MCF 10A (cell line): ENCODE measurements at regions of chr3 and their contacts with region 1.

Region 1: DNA sequence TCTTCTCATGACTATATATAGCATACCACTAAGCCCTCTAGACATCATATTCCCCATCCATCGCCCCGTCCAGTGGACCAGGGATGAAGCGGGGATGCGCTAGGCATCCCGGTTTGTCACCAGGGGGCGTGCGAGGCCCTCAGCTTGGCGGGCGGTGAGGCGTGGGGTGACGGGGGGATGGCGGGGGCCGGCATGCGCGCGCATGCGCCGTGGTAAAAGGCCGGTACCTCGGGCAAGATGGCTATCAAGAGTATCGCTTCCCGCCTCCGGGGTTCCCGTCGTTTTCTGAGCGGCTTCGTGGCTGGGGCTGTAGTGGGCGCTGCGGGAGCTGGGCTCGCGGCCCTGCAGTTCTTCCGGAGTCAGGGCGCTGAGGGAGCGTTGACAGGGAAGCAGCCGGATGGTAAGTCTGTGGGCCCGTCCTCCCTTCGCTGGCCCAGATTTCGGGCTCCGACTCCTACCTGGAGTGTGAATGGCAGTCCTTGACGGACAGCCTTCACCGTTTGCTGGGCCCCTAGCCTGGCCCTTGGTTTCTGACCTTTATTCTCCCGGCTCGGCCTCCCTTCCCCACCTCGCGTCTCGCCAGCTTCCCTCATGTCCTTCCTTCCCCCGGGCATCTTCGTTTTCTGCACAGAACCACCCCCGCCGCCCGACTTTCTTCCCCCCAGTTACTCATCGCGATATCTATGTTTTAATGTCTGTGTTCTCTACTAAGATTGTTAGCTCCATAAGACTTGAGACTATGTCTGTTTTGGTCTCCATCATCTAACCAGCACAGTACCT is at the start of gene EXOG:
- DNase-seq: peak; percentile 91
- H3K4me3 Mint-ChIP-seq: peak within 1 kb of the TSS; percentile 78
- H3K27ac Mint-ChIP-seq: peak within 1 kb of the TSS; percentile 33
- H3K4me1 Mint-ChIP-seq: peaks cover 9% of the 10 kb centered on the region
- H3K27me3 Mint-ChIP-seq: no peaks in the 10 kb centered on the region
- CTCF ChIP-seq: peak; percentile 82
- total RNA-seq, gene EXOG: 17.5 and 21.9 TPM in 2 replicates

Region 2: GRCh38 chr3:37237252-37237651 is 1259.1 kb before region 1 on chr3:
- CTCF ChIA-PET with region 1: no interaction called
- POLR2A ChIA-PET with region 1: no interaction called
- intact Hi-C with region 1: no loop called
- DNase-seq: peak; percentile 43
- H3K4me3 Mint-ChIP-seq: no peak overlapping the region
- H3K27ac Mint-ChIP-seq: peak overlapping the region; percentile 68
- H3K4me1 Mint-ChIP-seq: peaks cover 19% of the 10 kb centered on the region
- H3K27me3 Mint-ChIP-seq: no peaks in the 10 kb centered on the region
- CTCF ChIP-seq: no peak

Region 3: DNA sequence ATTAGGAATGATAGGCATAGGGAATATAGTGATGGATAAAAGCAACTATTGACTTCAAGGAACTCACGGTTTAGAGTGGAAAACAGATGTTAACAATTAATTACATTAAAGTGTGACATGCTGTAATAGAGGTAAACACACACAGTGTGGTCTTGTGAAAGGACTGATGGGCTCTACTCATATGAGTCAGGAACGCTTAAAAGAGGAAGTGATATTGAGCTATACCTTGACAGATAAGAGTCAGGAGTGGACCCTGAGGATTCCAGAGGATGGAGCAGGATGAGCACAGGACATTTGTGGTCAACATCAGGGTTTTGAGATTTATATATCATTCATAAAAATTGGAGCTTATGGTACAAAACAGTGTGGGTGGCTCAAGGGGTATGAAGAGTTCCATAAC is 10.8 kb after region 1 on chr3:
- CTCF ChIA-PET with region 1: interaction called, 12 read pairs
- POLR2A ChIA-PET with region 1: interaction called, 4 read pairs
- intact Hi-C with region 1: no loop called
- DNase-seq: no peak
- H3K4me3 Mint-ChIP-seq: no peak overlapping the region
- H3K27ac Mint-ChIP-seq: no peak overlapping the region
- H3K4me1 Mint-ChIP-seq: no peaks in the 10 kb centered on the region
- H3K27me3 Mint-ChIP-seq: no peaks in the 10 kb centered on the region
- CTCF ChIP-seq: no peak

Region 4: DNA sequence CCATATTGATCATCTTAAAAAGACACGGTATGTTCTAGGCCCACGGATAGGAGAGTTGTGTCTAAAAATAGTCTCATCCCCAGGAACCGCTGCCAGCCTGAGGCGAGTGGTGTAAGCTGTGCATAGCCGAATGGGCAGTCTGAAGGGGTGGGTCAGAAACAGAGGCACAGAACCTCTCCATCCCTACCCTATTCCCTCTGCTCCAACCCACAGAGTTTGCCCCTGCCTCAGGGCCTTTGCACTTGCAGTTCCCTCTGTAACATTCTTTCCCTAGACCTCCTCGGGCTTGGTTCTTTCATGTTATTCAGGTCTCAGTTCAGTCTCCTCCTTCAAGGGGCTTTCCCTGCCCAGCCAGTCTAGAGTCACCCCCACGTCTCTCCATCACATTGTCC is 148.3 kb after region 1 on chr3:
- CTCF ChIA-PET with region 1: interaction called, 10 read pairs
- POLR2A ChIA-PET with region 1: no interaction called
- intact Hi-C with region 1: no loop called
- DNase-seq: no peak
- H3K4me3 Mint-ChIP-seq: no peak overlapping the region
- H3K27ac Mint-ChIP-seq: no peak overlapping the region
- H3K4me1 Mint-ChIP-seq: no peaks in the 10 kb centered on the region
- H3K27me3 Mint-ChIP-seq: no peaks in the 10 kb centered on the region
- CTCF ChIP-seq: no peak

Region 5: GRCh38 chr3:38651154-38651789 is 155.0 kb after region 1 on chr3:
- CTCF ChIA-PET with region 1: interaction called, 8 read pairs
- POLR2A ChIA-PET with region 1: no interaction called
- intact Hi-C with region 1: loop called (anchors 1 kb)
- DNase-seq: peak; percentile 59
- H3K4me3 Mint-ChIP-seq: no peak overlapping the region
- H3K27ac Mint-ChIP-seq: no peak overlapping the region
- H3K4me1 Mint-ChIP-seq: no peaks in the 10 kb centered on the region
- H3K27me3 Mint-ChIP-seq: no peaks in the 10 kb centered on the region
- CTCF ChIP-seq: peak; percentile 83

Region 6: GRCh38 chr3:38662544-38662943 is 166.2 kb after region 1 on chr3:
- CTCF ChIA-PET with region 1: interaction called, 7 read pairs
- POLR2A ChIA-PET with region 1: no interaction called
- intact Hi-C with region 1: loop called (anchors 1 kb)
- DNase-seq: peak; percentile 55
- H3K4me3 Mint-ChIP-seq: no peak overlapping the region
- H3K27ac Mint-ChIP-seq: no peak overlapping the region
- H3K4me1 Mint-ChIP-seq: no peaks in the 10 kb centered on the region
- H3K27me3 Mint-ChIP-seq: peaks cover 70% of the 10 kb centered on the region
- CTCF ChIP-seq: peak; percentile 59

Region 7: DNA sequence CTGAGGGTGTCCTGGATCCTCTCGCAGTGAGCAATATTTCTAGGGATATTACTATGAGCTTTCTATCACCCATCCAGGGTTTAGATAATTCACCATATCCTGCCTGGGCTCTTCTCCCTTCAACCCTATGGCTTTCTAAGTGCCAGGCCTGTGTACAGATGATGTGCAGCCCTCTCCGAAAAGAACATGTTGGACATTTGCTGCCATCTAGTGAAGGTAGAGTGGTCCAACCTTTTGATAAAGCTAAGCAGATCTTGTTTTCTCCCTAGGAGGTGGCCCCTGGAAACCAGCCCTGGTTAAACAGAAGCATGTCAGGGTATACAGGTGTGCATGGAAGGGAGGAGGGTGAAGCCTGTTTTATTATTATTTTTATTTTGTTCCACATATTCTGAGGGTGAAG is 347.6 kb after region 1 on chr3:
- CTCF ChIA-PET with region 1: interaction called, 10 read pairs
- POLR2A ChIA-PET with region 1: no interaction called
- intact Hi-C with region 1: no loop called
- DNase-seq: peak; percentile 55
- H3K4me3 Mint-ChIP-seq: no peak overlapping the region
- H3K27ac Mint-ChIP-seq: no peak overlapping the region
- H3K4me1 Mint-ChIP-seq: no peaks in the 10 kb centered on the region
- H3K27me3 Mint-ChIP-seq: peaks cover 71% of the 10 kb centered on the region
- CTCF ChIP-seq: peak; percentile 53

Region 8: DNA sequence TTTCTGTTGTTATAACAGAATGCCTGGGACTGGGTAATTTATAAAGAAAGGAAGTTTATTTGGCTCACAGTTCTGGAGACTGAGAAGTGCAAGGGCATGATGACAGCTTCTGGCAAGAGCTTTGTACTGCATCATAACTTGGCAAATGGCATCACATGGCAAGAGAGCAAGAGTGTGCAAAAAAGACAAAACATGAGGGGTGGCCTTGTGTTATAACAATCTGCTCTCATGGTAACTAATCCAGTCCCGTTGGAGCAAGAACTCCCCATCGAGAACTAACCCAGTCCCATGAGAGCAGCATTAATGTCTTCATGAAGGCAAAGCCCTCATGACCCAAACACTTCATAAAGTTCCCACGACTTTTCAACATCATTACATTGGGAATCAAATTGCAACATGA is 532.2 kb after region 1 on chr3:
- CTCF ChIA-PET with region 1: interaction called, 10 read pairs
- POLR2A ChIA-PET with region 1: no interaction called
- intact Hi-C with region 1: no loop called
- DNase-seq: no peak
- H3K4me3 Mint-ChIP-seq: no peak overlapping the region
- H3K27ac Mint-ChIP-seq: no peak overlapping the region
- H3K4me1 Mint-ChIP-seq: no peaks in the 10 kb centered on the region
- H3K27me3 Mint-ChIP-seq: peaks cover 58% of the 10 kb centered on the region
- CTCF ChIP-seq: no peak

Region 9: GRCh38 chr3:39434574-39434973 is 938.3 kb after region 1 on chr3:
- CTCF ChIA-PET with region 1: no interaction called
- POLR2A ChIA-PET with region 1: no interaction called
- intact Hi-C with region 1: no loop called
- DNase-seq: peak; percentile 61
- H3K4me3 Mint-ChIP-seq: no peak overlapping the region
- H3K27ac Mint-ChIP-seq: peak overlapping the region; percentile 69
- H3K4me1 Mint-ChIP-seq: peaks cover 17% of the 10 kb centered on the region
- H3K27me3 Mint-ChIP-seq: no peaks in the 10 kb centered on the region
- CTCF ChIP-seq: no peak